ENCODE measurements at regions of chr16 and their contacts with region 1.

Region 1: GRCh38 chr16:67816240-67817031 is 9.7 kb downstream of the TSNAXIP1 start:
- DNase-seq: peak; percentile 94
- H3K4me3 Mint-ChIP-seq: peak overlapping the region; percentile 35
- H3K27ac Mint-ChIP-seq: peak overlapping the region; percentile 28
- H3K4me1 Mint-ChIP-seq: peaks cover 2% of the 10 kb centered on the region
- H3K27me3 Mint-ChIP-seq: no peaks in the 10 kb centered on the region

Region 2: DNA sequence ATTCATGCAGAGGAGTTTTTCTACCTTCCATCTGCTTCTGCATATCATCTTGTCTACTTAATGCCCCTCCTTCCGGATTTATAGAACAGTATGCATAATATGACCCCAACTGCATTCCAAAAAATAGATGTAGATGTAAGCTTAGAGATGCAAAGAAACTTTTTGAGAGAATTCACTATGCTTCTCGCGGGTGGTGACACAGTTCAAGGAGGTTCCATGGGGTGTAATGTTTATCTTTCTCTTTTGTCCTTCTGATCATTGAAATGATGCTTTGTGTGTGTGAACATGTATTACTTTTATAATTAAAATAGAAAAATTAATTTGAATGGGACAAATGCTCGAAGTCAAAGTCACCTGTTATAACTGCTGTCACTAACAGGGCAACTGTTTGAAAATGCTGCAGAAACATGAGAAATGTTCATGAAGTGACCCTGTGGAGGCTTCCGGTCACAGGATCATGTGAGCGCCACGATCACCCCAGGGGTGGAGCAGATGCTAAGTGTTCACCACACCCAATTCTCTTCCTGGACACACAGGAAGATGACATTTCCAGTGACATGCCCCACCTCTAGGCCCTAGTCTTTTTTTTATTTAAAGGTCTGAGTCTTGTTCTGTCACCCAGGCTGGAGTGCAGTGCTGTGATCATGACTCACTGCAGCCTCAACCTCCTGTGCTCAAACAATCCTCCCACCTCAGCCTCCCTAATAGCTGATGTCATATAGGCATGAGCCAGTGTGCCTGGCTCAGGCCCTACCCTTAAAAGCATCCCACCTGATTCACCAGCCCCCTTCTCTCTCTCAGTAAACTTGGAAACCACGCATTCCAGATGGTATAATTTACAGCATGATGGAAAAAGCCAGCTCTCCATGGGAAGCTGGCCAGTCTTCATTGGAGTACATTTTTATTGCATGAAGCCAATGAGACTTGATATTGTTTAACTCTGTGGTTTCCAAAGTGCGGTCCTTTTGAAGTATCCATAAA is 312.1 kb before region 1 on chr16:
- CTCF ChIA-PET with region 1: no interaction called
- POLR2A ChIA-PET with region 1: no interaction called
- intact Hi-C with region 1: no loop called
- DNase-seq: peak; percentile 76
- H3K4me3 Mint-ChIP-seq: no peak overlapping the region
- H3K27ac Mint-ChIP-seq: peak overlapping the region; percentile 82
- H3K4me1 Mint-ChIP-seq: peaks cover 42% of the 10 kb centered on the region
- H3K27me3 Mint-ChIP-seq: no peaks in the 10 kb centered on the region

Region 3: GRCh38 chr16:67719048-67719777 is 97.2 kb before region 1 on chr16 and contains the start of gene GFOD2:
- CTCF ChIA-PET with region 1: interaction called, 12 read pairs
- POLR2A ChIA-PET with region 1: no interaction called
- intact Hi-C with region 1: no loop called
- DNase-seq: peak; percentile 99
- H3K4me3 Mint-ChIP-seq: peak within 1 kb of the TSS; percentile 94
- H3K27ac Mint-ChIP-seq: peak within 1 kb of the TSS; percentile 96
- H3K4me1 Mint-ChIP-seq: peaks cover 35% of the 10 kb centered on the region
- H3K27me3 Mint-ChIP-seq: no peaks in the 10 kb centered on the region
- total RNA-seq, gene GFOD2: 12.6 to 13.7 TPM

Region 4: GRCh38 chr16:67841764-67842508 is 25.5 kb after region 1 on chr16 and contains the start of gene THAP11:
- CTCF ChIA-PET with region 1: interaction called, 33 read pairs
- POLR2A ChIA-PET with region 1: interaction called, 7 read pairs
- intact Hi-C with region 1: loop called (anchors 2 kb)
- DNase-seq: peak; percentile 97
- H3K4me3 Mint-ChIP-seq: peak within 1 kb of the TSS; percentile 90
- H3K27ac Mint-ChIP-seq: peak within 1 kb of the TSS; percentile 95
- H3K4me1 Mint-ChIP-seq: peaks cover 34% of the 10 kb centered on the region
- H3K27me3 Mint-ChIP-seq: no peaks in the 10 kb centered on the region
- total RNA-seq, gene THAP11: 31.8 to 32.1 TPM

Region 5: DNA sequence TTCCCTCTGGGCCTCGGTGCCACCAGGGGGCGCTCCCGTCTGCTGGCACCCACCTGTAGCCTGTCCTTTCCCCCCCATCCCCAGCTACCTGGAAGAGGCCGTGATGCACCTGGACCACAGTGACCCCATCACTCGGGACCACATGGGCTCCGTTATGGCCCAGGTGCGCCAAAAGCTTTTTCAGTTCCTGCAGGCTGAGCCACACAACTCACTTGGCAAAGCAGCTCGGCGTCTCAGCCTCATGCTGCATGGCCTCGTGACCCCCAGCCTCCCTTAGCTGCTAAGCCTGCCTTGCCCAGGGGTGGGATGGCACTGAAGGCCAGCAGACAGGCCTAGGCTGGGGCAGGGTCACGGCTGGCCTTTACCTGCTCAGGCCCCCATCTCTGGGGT is 67.4 kb after region 1 on chr16:
- CTCF ChIA-PET with region 1: interaction called, 13 read pairs
- POLR2A ChIA-PET with region 1: no interaction called
- intact Hi-C with region 1: no loop called
- DNase-seq: peak; percentile 73
- H3K4me3 Mint-ChIP-seq: no peak overlapping the region
- H3K27ac Mint-ChIP-seq: no peak overlapping the region
- H3K4me1 Mint-ChIP-seq: no peaks in the 10 kb centered on the region
- H3K27me3 Mint-ChIP-seq: no peaks in the 10 kb centered on the region

Region 6: GRCh38 chr16:67935402-67936123 is 119.1 kb after region 1 on chr16:
- CTCF ChIA-PET with region 1: interaction called, 22 read pairs
- POLR2A ChIA-PET with region 1: no interaction called
- intact Hi-C with region 1: no loop called
- DNase-seq: peak; percentile 98
- H3K4me3 Mint-ChIP-seq: peak overlapping the region; percentile 100
- H3K27ac Mint-ChIP-seq: peak overlapping the region; percentile 99
- H3K4me1 Mint-ChIP-seq: peaks cover 41% of the 10 kb centered on the region
- H3K27me3 Mint-ChIP-seq: no peaks in the 10 kb centered on the region

Region 7: DNA sequence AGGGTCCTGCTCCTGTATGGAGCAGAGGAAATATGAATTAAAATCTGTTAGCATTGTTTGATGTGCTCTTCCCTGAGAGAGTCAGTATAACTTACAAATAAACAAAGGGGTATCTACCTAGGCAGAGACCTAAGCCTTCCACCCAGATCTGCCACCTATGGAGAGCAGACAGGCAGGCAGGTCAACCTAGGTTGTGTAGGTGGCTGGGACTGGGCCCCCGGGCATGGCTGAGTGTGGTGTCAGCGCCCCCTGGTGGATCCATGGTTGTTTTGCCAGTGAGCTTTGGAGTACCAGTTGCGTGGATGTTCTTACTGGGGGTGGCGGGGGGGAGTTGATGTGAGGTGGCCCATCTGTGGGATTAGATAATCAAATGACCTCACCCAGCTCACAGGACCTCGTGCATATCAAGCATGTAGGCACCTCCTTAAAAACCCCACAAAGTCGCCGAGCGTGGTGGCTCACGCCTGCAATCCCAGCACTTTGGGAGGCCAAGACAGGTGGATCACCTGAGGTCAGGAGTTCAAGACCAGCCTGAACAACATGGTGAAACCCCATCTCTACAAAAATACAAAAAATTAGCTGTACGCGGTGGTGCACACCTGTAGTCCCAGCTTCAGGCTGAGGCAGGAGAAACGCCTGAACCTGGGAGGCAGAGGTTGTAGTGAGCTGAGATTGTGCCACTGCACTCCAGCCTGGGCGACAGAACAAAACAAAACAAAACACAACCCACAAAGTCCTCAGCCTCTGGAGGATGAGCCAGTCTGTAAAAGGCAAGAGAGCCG is 224.3 kb after region 1 on chr16:
- CTCF ChIA-PET with region 1: interaction called, 27 read pairs
- POLR2A ChIA-PET with region 1: interaction called, 4 read pairs
- intact Hi-C with region 1: loop called (anchors 2 kb)
- DNase-seq: peak; percentile 94
- H3K4me3 Mint-ChIP-seq: no peak overlapping the region
- H3K27ac Mint-ChIP-seq: peak overlapping the region; percentile 65
- H3K4me1 Mint-ChIP-seq: peaks cover 6% of the 10 kb centered on the region
- H3K27me3 Mint-ChIP-seq: no peaks in the 10 kb centered on the region